ENCODE measurements at regions of chr4 and their contacts with region 1.

Region 1: GRCh38 chr4:142238589-142238988 is 602.2 kb downstream of the IL15 start:
- DNase-seq: no peak
- ATAC-seq: no peak
- H3K4me3 ChIP-seq: no peak overlapping the region
- H3K4me3 Mint-ChIP-seq: no peak overlapping the region
- H3K27ac ChIP-seq: no peak overlapping the region
- H3K27ac Mint-ChIP-seq: peak overlapping the region in 5 of 9 donors; percentile 1 to 62 (median 49)
- H3K4me1 ChIP-seq: no peaks in the 10 kb centered on the region
- H3K4me1 Mint-ChIP-seq: peaks cover 0 to 68% (median 37%) of the 10 kb centered on the region in 7 donors
- H3K27me3 ChIP-seq: no peaks in the 10 kb centered on the region
- H3K27me3 Mint-ChIP-seq: no peaks in the 10 kb centered on the region

Region 2: DNA sequence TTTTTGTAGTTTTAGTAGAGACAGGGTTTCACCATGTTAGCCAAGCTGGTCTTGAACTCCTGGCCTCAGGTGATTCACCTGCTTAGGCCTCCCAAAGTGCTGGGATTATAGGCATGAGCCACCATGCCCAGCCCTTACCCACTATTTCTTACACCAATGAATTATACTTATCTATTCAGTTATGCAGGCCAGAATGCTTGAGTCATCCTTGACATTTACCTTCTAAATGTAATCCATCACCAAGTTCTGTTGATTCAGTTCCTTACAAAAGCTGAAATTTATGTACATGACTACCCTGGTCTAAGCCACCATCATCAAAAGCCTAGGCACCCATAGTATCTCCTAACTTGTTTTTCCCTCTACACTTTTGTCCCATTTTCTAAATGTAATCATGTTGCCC is 16.5 kb before region 1 on chr4:
- CTCF ChIA-PET with region 1: interaction called, 3 read pairs
- POLR2A ChIA-PET with region 1: no interaction called
- intact Hi-C with region 1: loop called in 1 of 2 experiments (anchors 2 kb)
- DNase-seq: no peak
- ATAC-seq: no peak
- H3K4me3 ChIP-seq: no peak overlapping the region
- H3K4me3 Mint-ChIP-seq: no peak overlapping the region
- H3K27ac ChIP-seq: no peak overlapping the region
- H3K27ac Mint-ChIP-seq: peak overlapping the region in 2 of 9 donors; percentile 35 to 41
- H3K4me1 ChIP-seq: no peaks in the 10 kb centered on the region
- H3K4me1 Mint-ChIP-seq: peaks cover 3 to 64% (median 19%) of the 10 kb centered on the region in 7 donors
- H3K27me3 ChIP-seq: no peaks in the 10 kb centered on the region
- H3K27me3 Mint-ChIP-seq: no peaks in the 10 kb centered on the region

Region 3: GRCh38 chr4:142285222-142285583 is 46.6 kb after region 1 on chr4:
- CTCF ChIA-PET with region 1: no interaction called
- POLR2A ChIA-PET with region 1: no interaction called
- intact Hi-C with region 1: no loop called
- DNase-seq: no peak
- ATAC-seq: no peak
- H3K4me3 ChIP-seq: no peak overlapping the region
- H3K4me3 Mint-ChIP-seq: no peak overlapping the region
- H3K27ac ChIP-seq: no peak overlapping the region
- H3K27ac Mint-ChIP-seq: no peak overlapping the region
- H3K4me1 ChIP-seq: peaks cover 7 to 15% of the 10 kb centered on the region in 2 donors
- H3K4me1 Mint-ChIP-seq: peaks cover 3 to 38% (median 16%) of the 10 kb centered on the region in 7 donors
- H3K27me3 ChIP-seq: no peaks in the 10 kb centered on the region
- H3K27me3 Mint-ChIP-seq: no peaks in the 10 kb centered on the region

Measured in naive thymus-derived CD4-positive, alpha-beta T cell (primary cell).